Gastrocnemius medialis (tissue), 4 donors: ENCODE measurements at regions of chr22 and their contacts with region 1.

Region 1: DNA sequence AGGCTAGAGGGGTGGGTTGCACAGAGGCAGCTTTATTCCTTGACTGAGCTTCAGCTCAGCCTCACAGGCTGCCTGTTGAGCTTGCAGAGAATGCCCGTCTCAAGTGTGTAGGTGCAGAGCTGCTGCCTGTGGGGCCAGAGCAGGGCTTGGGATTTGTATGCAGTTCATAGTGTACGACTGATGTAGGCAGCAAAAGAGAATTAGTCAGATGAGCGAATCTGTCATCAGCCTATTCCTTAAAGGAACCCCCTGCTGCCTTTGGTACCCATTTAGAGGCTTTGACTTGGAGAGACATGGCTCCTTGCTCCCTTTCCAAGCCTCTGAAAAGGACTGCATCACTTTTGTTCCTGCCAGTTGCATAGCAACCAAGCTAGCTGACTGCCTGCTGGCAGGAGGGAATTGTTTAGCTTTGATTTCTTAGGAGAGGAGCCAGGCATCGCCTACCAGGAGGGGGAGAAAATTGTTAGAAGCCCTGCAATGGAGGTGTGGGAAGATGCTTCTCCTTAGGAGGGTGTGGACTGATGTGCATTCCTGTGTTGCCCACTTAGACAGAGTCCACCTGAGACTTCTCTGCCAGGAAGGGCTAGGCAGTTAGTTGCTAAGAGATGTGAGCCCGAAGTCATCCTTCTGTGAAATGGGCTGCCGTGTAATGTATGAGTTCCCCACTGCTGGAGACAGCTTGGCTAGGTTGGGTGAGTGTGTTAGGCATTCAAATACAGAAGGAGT is 10.9 kb downstream of the ACO2 start:
- DNase-seq: peak in 1 of 2 donors; percentile 52
- ATAC-seq: peak; percentile 6 to 21
- H3K4me3 ChIP-seq: peak overlapping the region in 2 of 4 donors; percentile 9 to 16
- H3K27ac ChIP-seq: peak overlapping the region; percentile 96 to 98 (median 96)
- H3K4me1 ChIP-seq: peaks cover 75 to 83% of the 10 kb centered on the region in 2 donors
- H3K27me3 ChIP-seq: no peaks in the 10 kb centered on the region
- CTCF ChIP-seq: no peak
- POLR2A ChIP-seq: no peak

Region 2: GRCh38 chr22:41403532-41404318 is 76.1 kb before region 1 on chr22:
- in situ Hi-C with region 1: loop called in 1 of 4 experiments (anchors 10 kb)
- intact Hi-C with region 1: no loop called
- DNase-seq: peak; percentile 96 to 99
- ATAC-seq: peak; percentile 74 to 90
- H3K4me3 ChIP-seq: no peak overlapping the region
- H3K27ac ChIP-seq: peak overlapping the region; percentile 78 to 88 (median 83)
- H3K4me1 ChIP-seq: peaks cover 22 to 26% of the 10 kb centered on the region in 2 donors
- H3K27me3 ChIP-seq: no peaks in the 10 kb centered on the region
- CTCF ChIP-seq: peak; percentile 98 to 99 (median 99)
- POLR2A ChIP-seq: no peak

Region 3: GRCh38 chr22:41410311-41410751 is 69.5 kb before region 1 on chr22:
- in situ Hi-C with region 1: loop called in 1 of 4 experiments (anchors 10 kb)
- intact Hi-C with region 1: loop called (anchors 1 kb)
- DNase-seq: peak; percentile 92 to 98
- ATAC-seq: peak; percentile 54 to 58
- H3K4me3 ChIP-seq: no peak overlapping the region
- H3K27ac ChIP-seq: peak overlapping the region; percentile 97 to 100 (median 98)
- H3K4me1 ChIP-seq: peaks cover 58 to 61% of the 10 kb centered on the region in 2 donors
- H3K27me3 ChIP-seq: no peaks in the 10 kb centered on the region
- CTCF ChIP-seq: no peak
- POLR2A ChIP-seq: peak; percentile 68 to 71

Region 4: GRCh38 chr22:41565403-41566054 is 85.7 kb after region 1 on chr22:
- in situ Hi-C with region 1: no loop called
- intact Hi-C with region 1: no loop called
- DNase-seq: peak; percentile 15 to 34
- ATAC-seq: peak; percentile 62 to 77
- H3K4me3 ChIP-seq: no peak overlapping the region
- H3K27ac ChIP-seq: peak overlapping the region in 3 of 4 donors; percentile 22 to 50 (median 43)
- H3K4me1 ChIP-seq: peaks cover 0 to 6% of the 10 kb centered on the region in 2 donors
- H3K27me3 ChIP-seq: no peaks in the 10 kb centered on the region
- CTCF ChIP-seq: no peak
- POLR2A ChIP-seq: no peak